ENCODE measurements at regions of chr9 and their contacts with region 1.

Region 1: DNA sequence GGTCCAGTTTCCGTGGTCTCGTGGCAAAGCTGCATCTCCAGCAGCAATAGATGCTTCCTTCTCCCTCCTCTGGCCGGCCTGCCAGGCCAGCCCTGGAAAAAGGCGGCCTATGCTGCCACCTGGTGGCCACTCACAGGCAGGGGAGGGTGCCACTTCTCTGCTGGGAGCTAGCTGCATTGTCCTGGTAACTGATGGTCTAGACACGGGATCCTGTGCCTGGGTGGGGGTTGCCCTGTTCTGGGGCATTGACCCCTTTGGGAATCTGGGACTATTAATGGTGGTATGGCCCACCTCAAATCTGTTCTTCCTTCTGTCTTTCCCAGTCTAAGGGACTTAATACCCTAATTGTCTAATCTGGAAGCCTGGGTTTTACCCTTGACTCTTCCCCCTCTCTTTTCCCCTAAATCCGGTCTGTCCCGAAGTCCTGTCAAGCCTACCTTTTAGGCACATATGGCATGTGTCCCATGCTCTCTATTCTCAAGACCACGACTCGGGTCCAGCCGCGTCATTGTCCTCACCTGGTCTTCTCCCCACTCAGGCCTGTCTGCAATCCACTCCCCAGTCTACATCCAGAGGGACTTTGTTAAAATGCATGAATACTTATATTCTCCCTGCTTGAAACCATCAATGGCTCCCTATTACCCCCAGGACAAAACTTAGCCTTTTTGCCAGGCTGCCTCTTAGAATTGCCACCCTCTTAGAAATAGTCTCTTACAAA is 20.0 kb upstream of the PTGS1 start:
- DNase-seq: peak; percentile 63
- H3K4me3 Mint-ChIP-seq: no peak overlapping the region
- H3K27ac Mint-ChIP-seq: no peak overlapping the region
- H3K4me1 Mint-ChIP-seq: peaks cover 17% of the 10 kb centered on the region
- H3K27me3 Mint-ChIP-seq: peaks cover 31% of the 10 kb centered on the region

Region 2: GRCh38 chr9:122092611-122093506 is 257.9 kb before region 1 on chr9 and contains the start of gene TTLL11:
- intact Hi-C with region 1: loop called (anchors 1 kb)
- DNase-seq: peak; percentile 93
- H3K4me3 Mint-ChIP-seq: peak within 1 kb of the TSS; percentile 87
- H3K27ac Mint-ChIP-seq: peak within 1 kb of the TSS; percentile 37
- H3K4me1 Mint-ChIP-seq: peaks cover 19% of the 10 kb centered on the region
- H3K27me3 Mint-ChIP-seq: peaks cover 17% of the 10 kb centered on the region
- total RNA-seq, gene TTLL11: 2.2 and 2.4 TPM in 2 replicates

Region 3: GRCh38 chr9:122099271-122099869 is 251.4 kb before region 1 on chr9:
- intact Hi-C with region 1: loop called (anchors 1 kb)
- DNase-seq: peak; percentile 54
- H3K4me3 Mint-ChIP-seq: peak overlapping the region; percentile 47
- H3K27ac Mint-ChIP-seq: no peak overlapping the region
- H3K4me1 Mint-ChIP-seq: peaks cover 9% of the 10 kb centered on the region
- H3K27me3 Mint-ChIP-seq: peaks cover 22% of the 10 kb centered on the region

Region 4: DNA sequence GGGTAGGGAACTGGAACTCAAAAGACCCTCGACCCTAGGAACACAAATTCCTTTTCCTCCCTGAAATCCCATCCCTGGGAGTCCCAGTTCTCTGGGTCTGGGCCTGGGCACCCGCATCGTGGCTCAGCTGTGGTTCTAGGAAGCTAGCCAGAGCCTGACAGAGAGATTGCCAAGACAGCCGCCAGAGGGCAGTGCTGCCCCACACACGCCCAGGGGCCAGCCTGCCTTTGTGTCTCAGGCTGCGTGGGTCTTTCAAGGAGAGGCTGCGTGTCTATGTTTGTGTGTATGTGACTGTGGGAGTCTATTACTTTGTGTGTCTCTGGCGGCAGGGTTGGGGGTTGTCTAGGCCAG is 225.7 kb before region 1 on chr9:
- intact Hi-C with region 1: loop called (anchors 1 kb)
- DNase-seq: peak; percentile 63
- H3K4me3 Mint-ChIP-seq: no peak overlapping the region
- H3K27ac Mint-ChIP-seq: no peak overlapping the region
- H3K4me1 Mint-ChIP-seq: peaks cover 7% of the 10 kb centered on the region
- H3K27me3 Mint-ChIP-seq: peaks cover 30% of the 10 kb centered on the region

Region 5: DNA sequence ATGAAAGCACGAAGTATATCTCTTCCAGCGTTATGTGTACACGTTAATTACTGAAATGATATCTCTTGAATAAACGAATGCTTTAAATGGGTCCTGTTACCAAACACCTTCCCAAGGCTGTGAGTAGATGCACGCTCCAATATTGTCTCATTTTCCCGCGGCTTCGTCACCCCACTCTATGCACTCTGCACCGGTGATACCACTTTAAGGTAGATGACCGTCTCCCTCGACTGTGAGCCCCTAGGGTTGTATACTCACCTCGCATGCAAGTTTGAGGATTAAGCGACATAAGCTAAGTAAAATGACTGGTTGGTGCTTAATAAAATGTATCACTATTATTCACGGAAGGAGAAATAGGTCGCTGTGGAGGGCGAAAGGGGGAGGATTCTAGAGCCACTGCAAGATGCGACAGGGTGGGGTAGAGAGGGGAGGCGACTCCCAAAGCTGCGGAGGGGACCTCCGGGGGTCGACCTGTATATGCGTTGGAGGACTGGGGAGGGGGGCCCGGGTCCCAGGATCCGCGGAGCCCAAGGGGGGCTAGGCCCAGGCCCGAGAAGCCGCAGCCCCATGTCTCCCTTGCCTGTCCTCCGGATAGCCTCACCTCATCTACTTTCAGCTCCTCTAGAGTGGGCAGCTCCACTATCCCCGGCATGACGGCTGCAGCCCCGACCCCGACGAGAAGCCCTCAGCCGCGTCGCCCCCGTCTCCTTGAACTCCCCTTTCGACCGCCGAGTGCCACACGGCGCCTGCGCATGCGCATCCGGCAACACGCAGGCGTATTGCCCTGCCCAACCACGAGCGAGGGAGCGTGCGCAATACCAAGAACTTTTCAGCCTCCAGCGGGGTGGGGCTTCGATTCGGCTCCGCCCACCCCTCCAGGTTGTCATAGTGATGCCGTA is 191.5 kb before region 1 on chr9 and contains the starts of genes MORN5 and NDUFA8:
- intact Hi-C with region 1: no loop called
- DNase-seq: peak; percentile 94
- H3K4me3 Mint-ChIP-seq: peak within 1 kb of the TSS; percentile 91
- H3K27ac Mint-ChIP-seq: peak within 1 kb of the TSS; percentile 91
- H3K4me1 Mint-ChIP-seq: peaks cover 27% of the 10 kb centered on the region
- H3K27me3 Mint-ChIP-seq: peaks cover 12% of the 10 kb centered on the region
- total RNA-seq, gene MORN5: not detected in 2 replicates
- total RNA-seq, gene NDUFA8: 45.4 and 48.7 TPM in 2 replicates

Region 6: GRCh38 chr9:122218935-122219855 is 131.6 kb before region 1 on chr9:
- intact Hi-C with region 1: loop called (anchors 2 kb)
- DNase-seq: no peak
- H3K4me3 Mint-ChIP-seq: peak overlapping the region; percentile 28
- H3K27ac Mint-ChIP-seq: no peak overlapping the region
- H3K4me1 Mint-ChIP-seq: peaks cover 24% of the 10 kb centered on the region
- H3K27me3 Mint-ChIP-seq: peaks cover 85% of the 10 kb centered on the region